GM12878 (cell line): ENCODE measurements at regions of chr5 and their contacts with region 1.

Region 1: DNA sequence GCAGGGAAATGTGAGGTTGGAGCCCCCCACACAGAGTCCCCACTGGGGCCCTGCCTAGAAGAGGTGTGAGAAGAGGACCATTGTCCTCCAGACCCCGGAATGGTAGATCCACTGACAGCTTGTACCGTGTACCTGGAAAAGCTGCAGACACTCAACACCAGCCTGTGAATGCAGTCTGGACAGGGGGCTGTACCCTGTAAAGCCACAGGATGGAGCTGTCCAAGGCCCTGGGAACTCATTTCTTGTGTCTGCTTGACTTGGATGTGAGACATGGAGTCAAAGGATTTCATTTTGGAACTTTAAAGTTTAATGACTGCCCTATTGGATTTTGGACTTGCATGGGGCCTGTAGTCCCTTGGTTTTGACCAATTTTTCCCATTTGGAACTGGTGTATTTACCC is 535.0 kb upstream of the MEF2C start:
- DNase-seq: no peak
- ATAC-seq: no peak
- H3K4me3 ChIP-seq: no peak overlapping the region
- H3K27ac ChIP-seq: no peak overlapping the region
- H3K4me1 ChIP-seq: no peaks in the 10 kb centered on the region
- H3K27me3 ChIP-seq: no peaks in the 10 kb centered on the region
- CTCF ChIP-seq: no peak
- EP300 ChIP-seq: no peak
- POLR2A ChIP-seq: no peak
- RAD21 ChIP-seq: no peak

Region 2: DNA sequence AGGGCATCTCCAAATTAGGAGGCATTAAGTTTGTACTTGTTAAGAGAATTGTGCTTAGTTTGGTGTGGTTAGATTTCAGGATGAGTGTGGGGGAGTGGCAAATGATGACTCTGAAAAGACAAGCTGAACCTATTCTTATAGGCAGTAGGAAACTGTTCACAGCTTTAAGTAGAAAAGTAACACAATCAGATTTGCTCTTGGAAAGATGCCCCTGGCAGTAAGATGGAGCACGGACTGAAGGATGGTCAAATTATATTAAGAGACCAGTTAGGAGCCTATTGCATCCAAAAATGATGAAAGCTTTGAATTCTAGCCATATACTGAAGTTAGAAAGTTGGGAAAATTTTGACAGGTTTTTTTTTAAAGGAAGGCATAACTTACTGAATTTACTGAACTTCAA is 280.8 kb before region 1 on chr5:
- CTCF ChIA-PET with region 1: no interaction called
- POLR2A ChIA-PET with region 1: no interaction called
- RAD21 ChIA-PET with region 1: no interaction called
- SMC1A ChIA-PET with region 1: no interaction called
- in situ Hi-C with region 1: no loop called
- intact Hi-C with region 1: no loop called
- DNase-seq: no peak
- ATAC-seq: no peak
- H3K4me3 ChIP-seq: no peak overlapping the region
- H3K27ac ChIP-seq: no peak overlapping the region
- H3K4me1 ChIP-seq: no peaks in the 10 kb centered on the region
- H3K27me3 ChIP-seq: no peaks in the 10 kb centered on the region
- CTCF ChIP-seq: no peak
- EP300 ChIP-seq: no peak
- POLR2A ChIP-seq: no peak
- RAD21 ChIP-seq: no peak

Region 3: DNA sequence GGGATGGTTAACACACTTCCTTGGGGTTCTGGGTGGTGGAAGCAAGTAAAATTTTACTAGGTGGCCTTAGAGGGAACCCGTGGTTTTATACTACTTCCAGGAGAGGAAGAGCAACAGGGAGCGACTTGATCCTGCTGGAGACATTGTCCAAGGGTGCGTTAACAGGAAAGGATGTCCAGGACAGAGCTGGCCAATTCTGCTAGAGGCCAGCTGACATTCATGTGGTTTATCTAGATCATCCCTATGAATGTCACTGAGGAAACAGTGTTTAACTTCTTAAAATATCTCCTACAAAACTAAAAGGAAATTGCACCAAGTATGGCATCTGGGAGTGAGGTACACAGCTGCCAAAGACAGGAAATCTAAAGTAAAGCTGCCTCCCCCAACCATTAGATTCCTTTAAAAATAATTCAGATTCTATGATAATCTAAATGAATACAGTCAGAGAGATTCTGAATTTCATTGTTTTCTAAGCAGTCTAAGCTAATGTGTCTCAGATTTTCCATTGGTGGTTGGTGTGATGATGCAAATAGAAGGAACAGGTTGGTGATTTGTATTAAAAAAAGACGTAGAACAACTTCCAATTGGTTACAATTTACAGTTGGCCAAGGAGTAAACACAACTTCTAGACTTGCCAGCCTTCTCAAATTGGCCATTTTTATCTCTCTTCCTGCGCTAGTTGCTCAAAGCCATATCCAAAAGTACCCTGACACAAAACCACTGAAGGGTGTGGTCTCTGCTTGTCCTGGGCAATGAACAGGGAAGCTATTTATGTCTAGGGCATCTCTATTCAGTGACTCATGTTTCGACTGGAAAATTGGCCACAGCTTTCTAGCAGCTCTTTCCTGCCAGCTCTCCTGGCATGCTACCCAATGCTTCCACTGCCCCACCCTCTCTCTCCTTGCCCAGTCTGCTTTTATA is 39.7 kb after region 1 on chr5:
- CTCF ChIA-PET with region 1: no interaction called
- POLR2A ChIA-PET with region 1: no interaction called
- RAD21 ChIA-PET with region 1: no interaction called
- SMC1A ChIA-PET with region 1: no interaction called
- in situ Hi-C with region 1: no loop called
- intact Hi-C with region 1: loop called (anchors 2 kb)
- DNase-seq: no peak
- ATAC-seq: no peak
- H3K4me3 ChIP-seq: no peak overlapping the region
- H3K27ac ChIP-seq: no peak overlapping the region
- H3K4me1 ChIP-seq: no peaks in the 10 kb centered on the region
- H3K27me3 ChIP-seq: no peaks in the 10 kb centered on the region
- CTCF ChIP-seq: no peak
- EP300 ChIP-seq: no peak
- POLR2A ChIP-seq: no peak
- RAD21 ChIP-seq: no peak